ENCODE measurements at regions of chr9 and their contacts with region 1.

Region 1: GRCh38 chr9:111661150-111661801 is at the start of gene GNG10:
- DNase-seq: peak; percentile 78
- H3K4me3 ChIP-seq: peak within 1 kb of the TSS; percentile 77
- H3K27ac ChIP-seq: peak within 1 kb of the TSS; percentile 70
- H3K4me1 ChIP-seq: peaks cover 6% of the 10 kb centered on the region
- H3K27me3 ChIP-seq: no peaks in the 10 kb centered on the region
- CTCF ChIP-seq: no peak
- total RNA-seq, gene GNG10: 24.4 and 26.2 TPM in 2 replicates

Region 2: GRCh38 chr9:111678293-111678692 is 17.0 kb after region 1 on chr9:
- CTCF ChIA-PET with region 1: interaction called, 12 read pairs
- POLR2A ChIA-PET with region 1: interaction called, 4 read pairs
- intact Hi-C with region 1: no loop called
- DNase-seq: no peak
- H3K4me3 ChIP-seq: no peak overlapping the region
- H3K27ac ChIP-seq: no peak overlapping the region
- H3K4me1 ChIP-seq: no peaks in the 10 kb centered on the region
- H3K27me3 ChIP-seq: no peaks in the 10 kb centered on the region
- CTCF ChIP-seq: no peak

Region 3: GRCh38 chr9:111798786-111799185 is 137.5 kb after region 1 on chr9:
- CTCF ChIA-PET with region 1: no interaction called
- POLR2A ChIA-PET with region 1: no interaction called
- intact Hi-C with region 1: no loop called
- DNase-seq: no peak
- H3K4me3 ChIP-seq: no peak overlapping the region
- H3K27ac ChIP-seq: no peak overlapping the region
- H3K4me1 ChIP-seq: peaks cover 15% of the 10 kb centered on the region
- H3K27me3 ChIP-seq: no peaks in the 10 kb centered on the region
- CTCF ChIP-seq: no peak

Measured in A673 (cell line).